ENCODE measurements at regions of chr7 and their contacts with region 1.

Region 1: DNA sequence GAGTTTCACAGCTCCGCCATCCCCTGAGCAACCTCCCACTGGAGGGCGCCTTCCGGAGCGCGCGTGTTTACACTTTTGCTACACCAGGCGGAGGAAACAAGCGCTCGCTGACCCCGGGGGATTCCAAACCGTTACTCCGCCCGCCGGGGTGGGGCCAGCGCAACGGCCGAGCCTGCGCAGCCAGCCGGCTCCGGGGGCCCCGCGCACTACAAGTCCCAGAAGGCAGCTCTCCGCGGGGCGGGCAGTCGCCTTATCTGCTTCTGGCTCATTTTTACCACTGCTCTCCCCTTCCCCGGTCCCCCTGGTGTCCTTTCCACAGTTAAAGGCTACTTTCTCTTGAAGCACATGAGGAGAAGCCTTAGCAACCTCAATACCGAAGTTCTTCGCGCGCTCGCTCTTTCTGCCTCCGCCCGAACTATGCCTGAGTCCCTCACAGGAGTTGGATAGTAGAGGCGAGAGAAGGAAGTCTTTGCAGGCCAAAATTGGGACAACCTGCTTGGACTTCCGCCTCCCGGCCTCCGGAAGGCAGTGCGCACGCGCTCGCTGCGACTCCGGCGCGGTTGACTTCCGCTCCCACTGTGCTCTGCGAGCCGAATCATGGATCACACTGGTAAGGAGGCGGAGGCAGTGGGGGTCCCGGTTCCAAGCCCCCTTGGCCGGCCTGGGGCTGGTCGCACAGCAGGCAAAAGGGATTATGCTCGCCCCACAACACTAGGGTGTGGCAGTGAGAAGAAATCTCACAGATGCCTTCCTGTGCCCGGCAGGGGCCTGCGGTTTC is at the start of gene CBLL1:
- DNase-seq: peak; percentile 99
- H3K4me3 Mint-ChIP-seq: peak within 1 kb of the TSS; percentile 93
- H3K27ac Mint-ChIP-seq: peak within 1 kb of the TSS; percentile 100
- H3K4me1 Mint-ChIP-seq: peaks cover 46% of the 10 kb centered on the region
- H3K27me3 Mint-ChIP-seq: peaks cover 3% of the 10 kb centered on the region
- total RNA-seq, gene CBLL1: 46.9 and 49.6 TPM in 2 replicates

Region 2: DNA sequence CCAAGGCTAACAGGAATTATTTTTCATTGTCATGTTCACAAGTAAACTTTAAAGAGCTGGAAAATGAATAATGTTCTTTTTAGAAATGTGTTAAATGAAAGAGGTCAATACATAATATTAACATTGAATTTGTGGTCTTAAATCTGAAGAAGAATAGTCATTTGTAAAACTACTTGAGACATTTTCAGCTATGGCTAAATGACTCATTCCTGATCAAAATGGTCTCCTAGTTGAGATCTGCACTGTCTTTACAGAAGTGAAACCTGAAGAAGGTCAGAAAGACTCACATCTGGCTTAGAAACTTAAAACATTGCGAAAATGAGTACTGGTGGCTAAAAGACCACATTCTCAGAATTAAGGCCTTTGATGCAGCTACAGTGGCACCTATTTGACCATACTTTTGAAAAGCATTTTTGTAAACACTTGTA is 872.8 kb before region 1 on chr7:
- intact Hi-C with region 1: loop called (anchors 5 kb)
- DNase-seq: no peak
- H3K4me3 Mint-ChIP-seq: peak overlapping the region; percentile 43
- H3K27ac Mint-ChIP-seq: peak overlapping the region; percentile 64
- H3K4me1 Mint-ChIP-seq: peaks cover 75% of the 10 kb centered on the region
- H3K27me3 Mint-ChIP-seq: no peaks in the 10 kb centered on the region

Region 3: GRCh38 chr7:107579885-107580715 is 163.7 kb before region 1 on chr7 and contains the start of gene BCAP29:
- intact Hi-C with region 1: loop called (anchors 1 kb)
- DNase-seq: peak; percentile 65
- H3K4me3 Mint-ChIP-seq: peak within 1 kb of the TSS; percentile 89
- H3K27ac Mint-ChIP-seq: peak within 1 kb of the TSS; percentile 86
- H3K4me1 Mint-ChIP-seq: peaks cover 26% of the 10 kb centered on the region
- H3K27me3 Mint-ChIP-seq: no peaks in the 10 kb centered on the region
- total RNA-seq, gene BCAP29: 43.5 and 44.5 TPM in 2 replicates

Region 4: DNA sequence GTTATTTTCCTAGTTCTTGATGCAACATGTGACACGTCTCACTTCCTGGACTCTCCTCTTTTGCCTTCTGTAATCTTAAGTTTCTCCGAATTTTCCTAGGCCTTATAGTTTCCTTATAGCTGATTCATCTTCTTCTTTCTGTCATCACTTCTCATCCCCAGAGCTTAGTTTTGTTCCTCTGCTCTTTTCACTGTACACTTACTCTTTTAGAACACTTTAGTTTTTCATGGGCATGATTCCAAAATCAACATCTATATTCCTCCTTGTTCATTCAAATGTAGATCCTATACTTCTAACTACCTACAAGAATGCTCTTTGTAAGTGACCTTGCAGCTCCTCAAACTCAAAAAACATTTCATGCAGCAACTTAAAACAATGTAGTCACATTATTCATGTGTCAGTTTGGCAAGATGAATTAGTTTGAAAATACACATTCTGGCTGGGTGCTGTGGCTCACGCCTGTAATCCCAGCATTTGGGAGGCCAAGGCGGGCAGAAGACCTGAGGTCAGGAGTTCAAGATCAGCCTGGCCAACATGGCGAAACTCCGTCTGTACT is 72.3 kb after region 1 on chr7:
- intact Hi-C with region 1: loop called (anchors 1 kb)
- DNase-seq: no peak
- H3K4me3 Mint-ChIP-seq: peak overlapping the region; percentile 19
- H3K27ac Mint-ChIP-seq: peak overlapping the region; percentile 72
- H3K4me1 Mint-ChIP-seq: peaks cover 25% of the 10 kb centered on the region
- H3K27me3 Mint-ChIP-seq: no peaks in the 10 kb centered on the region

Region 5: GRCh38 chr7:107890962-107891635 is 147.3 kb after region 1 on chr7 and contains the start of gene DLD:
- intact Hi-C with region 1: loop called (anchors 1 kb)
- DNase-seq: peak; percentile 93
- H3K4me3 Mint-ChIP-seq: peak within 1 kb of the TSS; percentile 100
- H3K27ac Mint-ChIP-seq: peak within 1 kb of the TSS; percentile 100
- H3K4me1 Mint-ChIP-seq: peaks cover 49% of the 10 kb centered on the region
- H3K27me3 Mint-ChIP-seq: peaks cover 3% of the 10 kb centered on the region
- total RNA-seq, gene DLD: 98.6 and 114 TPM in 2 replicates

Region 6: DNA sequence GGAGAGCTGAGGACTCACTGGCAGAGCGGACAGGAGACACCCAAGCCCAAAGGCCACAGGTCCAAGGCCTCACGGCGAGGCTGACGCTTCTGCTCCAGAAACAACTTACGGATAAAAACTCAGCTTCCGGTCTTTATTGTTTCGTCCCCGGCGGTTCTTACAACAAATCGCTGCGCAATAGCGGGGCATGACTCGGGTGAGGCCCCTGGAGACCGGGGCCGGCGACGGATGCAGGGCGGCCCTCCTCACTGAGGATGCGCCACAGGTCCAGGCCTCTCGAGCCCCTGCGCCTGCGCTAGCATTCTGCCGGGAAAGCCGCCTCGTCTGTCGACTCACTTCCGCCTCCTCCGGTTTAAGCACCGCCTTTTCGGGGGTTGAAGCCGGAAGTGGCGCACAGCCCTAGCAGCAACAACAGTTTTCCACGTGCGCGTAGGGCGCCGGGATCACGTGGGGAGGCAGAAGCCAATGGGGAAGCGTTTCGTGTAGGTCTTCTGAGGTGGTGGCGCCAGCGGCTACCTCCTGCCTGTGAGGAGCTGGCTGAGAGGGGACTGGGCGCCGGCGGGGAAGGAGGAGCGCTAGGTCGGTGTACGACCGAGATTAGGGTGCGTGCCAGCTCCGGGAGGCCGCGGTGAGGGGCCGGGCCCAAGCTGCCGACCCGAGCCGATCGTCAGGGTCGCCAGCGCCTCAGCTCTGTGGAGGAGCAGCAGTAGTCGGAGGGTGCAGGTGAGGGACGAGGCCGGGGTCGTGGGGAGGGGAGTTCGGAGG is 825.8 kb after region 1 on chr7 and contains the starts of genes DNAJB9 and THAP5:
- intact Hi-C with region 1: loop called (anchors 1 kb)
- DNase-seq: peak; percentile 100
- H3K4me3 Mint-ChIP-seq: peak within 1 kb of the TSS; percentile 95
- H3K27ac Mint-ChIP-seq: peak within 1 kb of the TSS; percentile 96
- H3K4me1 Mint-ChIP-seq: peaks cover 62% of the 10 kb centered on the region
- H3K27me3 Mint-ChIP-seq: no peaks in the 10 kb centered on the region
- total RNA-seq, gene DNAJB9: 16.9 and 20.0 TPM in 2 replicates
- total RNA-seq, gene THAP5: 37.2 and 39.9 TPM in 2 replicates

Measured in activated T-helper 1 cell treated with anti-CD3 and anti-CD28 coated beads, Interleukin-12 subunit alpha, Interleukin-12 subunit beta, Interleukin-2, Interleukin-4 antibody, amounts not matched to agents 30 ng/mL and 10 ng/mL and 1 ng/mL, durations not matched to agents 14 hours and 24 hours and 36 hours (primary cell).